ENCODE measurements at regions of chr1 and their contacts with region 1.

Region 1: GRCh38 chr1:30099587-30100523 is 623.5 kb downstream of the MATN1 start:
- DNase-seq: no peak
- H3K4me3 ChIP-seq: no peak overlapping the region
- H3K4me1 ChIP-seq: no peaks in the 10 kb centered on the region
- H3K27me3 ChIP-seq: no peaks in the 10 kb centered on the region

Region 2: DNA sequence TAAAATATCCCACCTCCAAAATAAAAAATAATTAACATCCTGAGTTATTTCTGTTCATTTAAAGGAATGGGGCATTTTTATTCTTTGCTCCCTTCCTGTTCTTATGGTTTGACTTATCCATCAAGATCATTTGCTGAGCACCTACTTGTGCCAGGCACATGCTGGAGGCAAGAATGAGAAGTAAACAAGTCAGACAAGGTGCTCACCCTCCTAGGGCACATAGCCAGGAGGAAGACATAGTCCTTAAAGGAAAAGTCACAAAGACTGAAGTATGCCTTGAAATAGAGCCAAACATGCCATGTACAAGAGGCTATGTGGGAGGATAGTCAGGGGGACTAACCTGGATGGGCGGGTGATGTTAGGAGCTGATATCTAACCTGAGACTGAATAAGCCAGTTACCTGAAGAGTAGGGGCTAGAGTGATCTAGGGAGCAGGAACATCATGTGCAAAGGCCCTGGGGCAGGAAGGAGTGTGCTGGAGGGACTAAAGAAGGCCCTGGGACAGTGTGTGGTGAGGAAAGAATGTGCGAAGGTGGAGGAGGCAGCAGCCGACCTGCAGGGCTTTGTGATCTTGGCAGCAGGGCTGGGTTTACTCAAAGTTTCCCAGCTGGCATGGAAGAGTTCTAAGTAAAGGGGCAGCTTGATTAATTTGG is 390.0 kb after region 1 on chr1:
- in situ Hi-C with region 1: loop called (anchors 5 kb)
- DNase-seq: no peak
- H3K4me3 ChIP-seq: no peak overlapping the region
- H3K4me1 ChIP-seq: no peaks in the 10 kb centered on the region
- H3K27me3 ChIP-seq: no peaks in the 10 kb centered on the region